ENCODE measurements at regions of chr5 and their contacts with region 1.

Region 1: DNA sequence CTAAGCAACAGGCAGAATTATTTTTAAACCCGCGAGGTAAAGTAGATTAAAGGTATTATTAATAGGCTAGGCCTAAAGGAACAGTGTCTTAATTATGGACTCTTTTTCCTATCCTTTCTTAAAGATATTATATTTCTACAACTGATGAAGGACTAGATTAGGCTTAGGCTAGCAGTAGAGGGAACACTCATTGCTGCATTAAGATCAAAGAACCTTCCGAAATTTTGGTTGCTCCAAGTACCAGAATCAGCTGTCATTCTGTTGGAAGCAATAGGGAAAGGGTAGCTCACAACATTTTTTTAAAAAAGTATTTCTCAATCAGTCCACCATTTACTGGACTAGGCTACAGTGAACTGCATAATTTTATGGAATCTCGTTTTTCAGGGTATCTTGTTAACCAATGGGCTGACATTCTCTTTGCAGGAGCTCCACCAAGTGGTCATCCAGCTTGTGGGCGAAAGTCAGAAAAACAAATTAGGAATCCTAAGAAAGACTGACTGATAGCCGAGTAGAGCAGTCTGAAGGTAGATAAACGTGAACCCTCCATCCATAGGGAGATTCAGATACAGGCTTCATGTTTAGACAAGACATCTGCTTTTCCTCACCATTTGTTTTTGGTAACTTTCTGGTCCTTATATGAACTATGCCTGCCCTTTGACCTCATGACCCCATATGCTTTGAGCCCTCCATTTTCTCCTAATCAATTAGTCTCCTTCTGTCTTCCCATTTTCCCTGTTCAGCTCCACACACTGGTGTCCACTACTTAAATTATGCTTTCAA is 103.6 kb upstream of the CHD1 start:
- DNase-seq: no peak
- H3K4me3 ChIP-seq: peak overlapping the region; percentile 23 to 48 (median 45)
- H3K27ac ChIP-seq: peak overlapping the region in 3 of 4 donors; percentile 20 to 63 (median 63)
- H3K4me1 ChIP-seq: peaks cover 2 to 17% (median 14%) of the 10 kb centered on the region in 4 donors
- H3K27me3 ChIP-seq: no peaks in the 10 kb centered on the region
- CTCF ChIP-seq: peak; percentile 69 to 81 (median 78)
- EP300 ChIP-seq: no peak
- POLR2A ChIP-seq: no peak

Region 2: DNA sequence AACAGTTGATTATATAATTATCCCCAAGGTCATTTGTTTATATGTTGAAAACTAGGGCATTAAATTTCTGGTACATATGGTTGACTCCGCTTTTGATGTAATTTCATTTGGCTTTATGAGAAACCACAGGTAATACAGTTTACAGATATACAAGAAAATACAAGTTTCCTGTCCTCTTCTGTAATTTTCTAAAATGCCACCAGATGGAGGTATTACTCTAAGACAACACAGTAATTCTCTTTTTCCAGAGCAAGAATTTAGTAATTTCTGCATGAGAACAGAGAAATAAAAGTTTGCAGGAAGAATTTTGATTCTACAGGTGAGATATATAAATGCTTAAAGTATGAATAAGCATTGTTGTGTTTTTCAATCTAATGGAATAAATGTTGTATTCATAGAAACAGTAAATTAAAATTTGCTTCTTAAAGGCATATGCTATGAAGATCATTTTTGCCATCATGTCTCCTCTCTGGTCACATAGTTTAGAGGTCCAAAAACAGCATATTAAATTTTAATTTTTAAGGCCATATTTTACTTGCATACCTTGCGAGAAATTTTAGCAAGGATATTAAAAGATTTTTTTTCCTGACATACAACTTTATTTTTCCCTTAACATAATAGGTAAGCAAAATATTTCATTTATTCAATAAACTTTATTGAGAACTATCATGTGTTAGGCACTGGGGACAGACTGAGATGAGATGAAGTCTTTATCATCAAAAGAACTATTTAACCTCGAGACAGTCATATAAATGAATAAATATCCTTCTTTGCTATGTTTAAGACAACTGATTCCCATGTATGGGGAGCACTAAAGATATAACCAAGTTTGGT is 126.3 kb before region 1 on chr5:
- intact Hi-C with region 1: loop called (anchors 1 kb)
- DNase-seq: no peak
- H3K4me3 ChIP-seq: no peak overlapping the region
- H3K27ac ChIP-seq: no peak overlapping the region
- H3K4me1 ChIP-seq: peaks cover 0 to 23% (median 18%) of the 10 kb centered on the region in 4 donors
- H3K27me3 ChIP-seq: no peaks in the 10 kb centered on the region
- CTCF ChIP-seq: peak; percentile 79 to 83 (median 81)
- EP300 ChIP-seq: no peak
- POLR2A ChIP-seq: no peak

Measured in esophagus muscularis mucosa (tissue), 4 donors.